Activated T-helper 1 cell treated with anti-CD3 and anti-CD28 coated beads, Interleukin-12 subunit alpha, Interleukin-12 subunit beta, Interleukin-2, Interleukin-4 antibody, amounts not matched to agents 30 ng/mL and 10 ng/mL and 1 ng/mL, durations not matched to agents 14 hours and 24 hours and 36 hours (primary cell): ENCODE measurements at regions of chr2 and their contacts with region 1.

Region 1: DNA sequence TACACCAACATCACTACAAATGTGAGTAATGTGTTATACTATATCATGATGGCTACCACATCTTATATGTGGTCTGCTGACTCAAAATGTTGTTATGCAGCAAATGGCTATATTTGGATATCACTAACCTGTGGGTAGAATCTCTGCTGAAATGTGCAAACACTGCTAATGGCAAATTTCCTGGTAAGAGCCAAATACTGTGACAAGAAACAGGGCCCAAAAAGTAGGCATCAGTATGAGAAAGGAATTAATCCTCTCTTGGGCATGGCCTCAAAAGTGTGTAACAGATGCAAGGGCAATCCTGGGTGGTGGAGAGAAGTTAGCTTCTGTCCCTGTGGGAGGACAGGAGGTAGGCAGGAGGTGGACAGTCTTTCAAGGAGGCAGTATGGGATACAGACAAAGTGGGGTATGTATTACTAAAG is 13.3 kb downstream of the ATF2 start:
- DNase-seq: no peak
- H3K4me3 Mint-ChIP-seq: peak overlapping the region; percentile 41
- H3K27ac Mint-ChIP-seq: peak overlapping the region; percentile 92
- H3K4me1 Mint-ChIP-seq: peaks cover 31% of the 10 kb centered on the region
- H3K27me3 Mint-ChIP-seq: no peaks in the 10 kb centered on the region

Region 2: GRCh38 chr2:174815526-174815925 is 339.1 kb before region 1 on chr2:
- intact Hi-C with region 1: no loop called
- DNase-seq: no peak
- H3K4me3 Mint-ChIP-seq: no peak overlapping the region
- H3K27ac Mint-ChIP-seq: no peak overlapping the region
- H3K4me1 Mint-ChIP-seq: no peaks in the 10 kb centered on the region
- H3K27me3 Mint-ChIP-seq: no peaks in the 10 kb centered on the region

Region 3: DNA sequence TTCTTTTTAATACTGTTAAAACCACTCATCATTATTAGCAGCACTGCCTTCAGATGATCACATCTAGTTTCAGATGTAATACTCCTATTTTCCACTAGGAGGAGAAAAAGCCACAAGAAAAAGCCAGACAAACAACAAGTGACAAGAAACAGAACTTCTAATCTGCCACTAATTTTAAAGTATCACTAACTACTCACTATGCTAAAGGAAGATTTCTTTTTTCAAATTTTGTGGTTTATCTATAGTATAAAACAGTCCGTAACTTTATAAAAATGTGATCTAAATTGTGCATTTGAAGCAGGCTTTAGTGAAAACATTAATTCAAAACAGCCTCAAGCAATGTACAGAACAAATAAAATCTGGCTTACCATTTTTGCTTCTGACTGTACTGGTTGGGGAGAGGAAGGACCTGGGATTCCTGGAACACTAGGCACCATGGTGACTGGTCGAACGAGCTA is 43.4 kb before region 1 on chr2:
- intact Hi-C with region 1: loop called (anchors 5 kb)
- DNase-seq: no peak
- H3K4me3 Mint-ChIP-seq: no peak overlapping the region
- H3K27ac Mint-ChIP-seq: peak overlapping the region; percentile 31
- H3K4me1 Mint-ChIP-seq: peaks cover 4% of the 10 kb centered on the region
- H3K27me3 Mint-ChIP-seq: no peaks in the 10 kb centered on the region

Region 4: GRCh38 chr2:175136334-175137215 is 18.1 kb before region 1 on chr2:
- intact Hi-C with region 1: loop called (anchors 2 kb)
- DNase-seq: no peak
- H3K4me3 Mint-ChIP-seq: no peak overlapping the region
- H3K27ac Mint-ChIP-seq: peak overlapping the region; percentile 34
- H3K4me1 Mint-ChIP-seq: peaks cover 40% of the 10 kb centered on the region
- H3K27me3 Mint-ChIP-seq: no peaks in the 10 kb centered on the region

Region 5: GRCh38 chr2:175181104-175181876 is 26.6 kb after region 1 on chr2 and contains the start of gene ATP5MC3:
- intact Hi-C with region 1: loop called (anchors 1 kb)
- DNase-seq: peak; percentile 89
- H3K4me3 Mint-ChIP-seq: peak within 1 kb of the TSS; percentile 89
- H3K27ac Mint-ChIP-seq: peak within 1 kb of the TSS; percentile 84
- H3K4me1 Mint-ChIP-seq: peaks cover 22% of the 10 kb centered on the region
- H3K27me3 Mint-ChIP-seq: no peaks in the 10 kb centered on the region
- total RNA-seq, gene ATP5MC3: 365 and 380 TPM in 2 replicates

Region 6: DNA sequence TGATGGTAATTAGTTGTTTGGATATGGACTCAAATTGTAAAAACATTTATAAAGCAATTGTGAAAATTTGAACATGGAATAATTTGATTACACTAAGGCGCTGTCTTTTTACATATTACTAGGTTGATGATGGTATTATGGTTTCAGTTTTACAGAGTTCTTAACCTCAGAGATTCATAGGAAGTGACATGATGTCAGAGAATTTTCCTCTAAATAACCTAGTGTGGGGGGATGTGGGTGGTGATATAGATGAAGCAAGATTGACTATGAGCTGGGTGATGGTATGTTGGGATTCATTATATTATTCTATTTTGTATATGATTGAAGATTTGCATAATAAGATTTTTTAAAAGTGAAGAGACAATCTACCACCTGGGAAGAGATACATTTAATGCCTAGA is 72.7 kb after region 1 on chr2:
- intact Hi-C with region 1: loop called (anchors 1 kb)
- DNase-seq: no peak
- H3K4me3 Mint-ChIP-seq: peak overlapping the region; percentile 3
- H3K27ac Mint-ChIP-seq: peak overlapping the region; percentile 80
- H3K4me1 Mint-ChIP-seq: peaks cover 26% of the 10 kb centered on the region
- H3K27me3 Mint-ChIP-seq: peaks cover 19% of the 10 kb centered on the region